Activated CD4-positive, alpha-beta T cell treated with anti-CD3 and anti-CD28 coated beads, Interleukin-2, amount 10 ng/mL, durations not matched to agents 24 days and 14 days (primary cell): ENCODE measurements at regions of chr6 and their contacts with region 1.

Region 1: DNA sequence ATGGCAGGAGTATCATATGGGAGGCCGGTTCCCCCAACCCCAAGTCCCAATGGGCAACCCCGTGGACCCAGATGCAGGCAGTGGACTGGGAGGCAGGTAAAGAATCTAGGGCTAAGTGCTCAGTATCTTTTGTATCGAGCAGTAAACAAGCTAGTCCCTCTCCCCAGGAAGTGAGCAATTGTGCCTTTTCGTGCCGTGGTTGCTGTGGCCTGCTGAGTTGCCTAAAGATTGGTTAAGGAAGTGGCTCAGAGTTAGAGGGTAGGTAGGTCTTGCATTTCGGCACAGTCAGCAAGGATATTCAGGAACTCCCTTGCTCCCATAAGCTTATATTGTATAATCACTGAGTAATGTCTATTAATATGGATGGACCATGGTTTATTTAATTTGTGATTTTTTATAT is 1.3 kb upstream of the DNAH8 start:
- DNase-seq: peak; percentile 92
- H3K4me3 Mint-ChIP-seq: peak overlapping the region; percentile 70
- H3K27ac Mint-ChIP-seq: peak overlapping the region; percentile 91
- H3K4me1 Mint-ChIP-seq: peaks cover 32% of the 10 kb centered on the region
- H3K27me3 Mint-ChIP-seq: peaks cover 13% of the 10 kb centered on the region

Region 2: DNA sequence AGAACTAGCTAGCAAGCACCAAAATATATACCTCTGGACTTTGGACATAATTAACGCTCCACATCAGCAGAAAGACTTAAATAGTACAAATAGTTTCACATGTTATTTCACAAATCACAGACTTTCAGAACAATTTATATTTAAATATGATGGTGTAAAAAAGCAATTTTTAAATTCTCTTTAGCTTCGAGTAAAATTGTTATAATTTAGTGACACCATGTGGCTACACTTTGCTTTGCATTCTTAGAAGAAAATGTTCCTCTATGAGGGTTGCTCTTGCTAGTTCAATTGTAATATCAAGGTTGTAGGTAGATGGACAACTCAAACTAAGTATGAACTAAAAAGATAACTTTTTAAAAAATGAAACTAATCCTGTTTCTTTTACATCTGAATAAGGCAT is 143.1 kb before region 1 on chr6:
- intact Hi-C with region 1: loop called (anchors 5 kb)
- DNase-seq: no peak
- H3K4me3 Mint-ChIP-seq: no peak overlapping the region
- H3K27ac Mint-ChIP-seq: no peak overlapping the region
- H3K4me1 Mint-ChIP-seq: peaks cover 24% of the 10 kb centered on the region
- H3K27me3 Mint-ChIP-seq: no peaks in the 10 kb centered on the region

Region 3: GRCh38 chr6:38671885-38672467 is 41.8 kb before region 1 on chr6:
- intact Hi-C with region 1: loop called (anchors 2 kb)
- DNase-seq: peak; percentile 81
- H3K4me3 Mint-ChIP-seq: no peak overlapping the region
- H3K27ac Mint-ChIP-seq: no peak overlapping the region
- H3K4me1 Mint-ChIP-seq: peaks cover 27% of the 10 kb centered on the region
- H3K27me3 Mint-ChIP-seq: no peaks in the 10 kb centered on the region

Region 4: DNA sequence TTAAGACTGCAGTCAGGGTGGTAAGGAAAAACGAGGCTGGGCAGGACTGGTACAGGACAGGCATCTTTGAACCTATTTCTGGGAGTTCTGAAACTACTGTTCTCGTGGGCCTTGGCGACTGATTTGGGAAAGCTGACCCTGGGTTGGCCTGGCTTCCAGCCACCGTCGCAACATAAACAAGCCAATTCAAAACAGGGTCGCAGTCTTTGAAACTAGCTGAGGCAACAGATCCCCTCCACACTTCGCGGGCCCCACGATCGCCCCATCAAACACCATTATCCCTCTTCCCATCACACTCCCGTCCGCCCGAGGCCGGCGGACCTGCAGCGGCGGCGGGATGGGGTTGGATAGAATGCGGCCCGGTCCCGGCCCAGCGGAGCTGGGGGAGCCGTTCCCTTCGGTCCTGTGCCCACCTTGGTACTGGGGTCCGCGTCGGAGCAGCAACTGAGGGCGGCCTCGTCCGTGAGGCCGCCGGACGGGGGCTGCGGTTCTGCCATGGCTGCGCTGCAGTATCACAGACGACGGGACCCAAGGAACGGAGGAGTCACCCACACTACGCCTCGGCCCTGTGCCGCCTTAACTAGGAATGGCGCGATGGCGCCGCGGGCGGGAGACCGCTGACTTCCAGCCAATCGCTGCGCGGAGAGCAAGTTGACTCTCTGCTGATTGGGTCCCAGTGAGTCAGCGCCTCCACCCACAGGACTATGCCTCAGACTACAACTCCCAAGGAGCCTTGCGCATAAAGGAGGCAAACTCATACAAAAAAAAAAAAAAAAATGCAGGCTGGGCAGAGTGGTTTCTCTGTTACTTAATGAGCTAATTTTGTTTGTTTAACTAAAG is 11.0 kb before region 1 on chr6 and contains the start of gene GLO1:
- intact Hi-C with region 1: loop called (anchors 1 kb)
- DNase-seq: peak; percentile 99
- H3K4me3 Mint-ChIP-seq: peak within 1 kb of the TSS; percentile 96
- H3K27ac Mint-ChIP-seq: peak within 1 kb of the TSS; percentile 93
- H3K4me1 Mint-ChIP-seq: peaks cover 40% of the 10 kb centered on the region
- H3K27me3 Mint-ChIP-seq: peaks cover 7% of the 10 kb centered on the region
- total RNA-seq, gene GLO1: 124 and 127 TPM in 2 replicates